ENCODE measurements at regions of chr19 and their contacts with region 1.

Region 1: DNA sequence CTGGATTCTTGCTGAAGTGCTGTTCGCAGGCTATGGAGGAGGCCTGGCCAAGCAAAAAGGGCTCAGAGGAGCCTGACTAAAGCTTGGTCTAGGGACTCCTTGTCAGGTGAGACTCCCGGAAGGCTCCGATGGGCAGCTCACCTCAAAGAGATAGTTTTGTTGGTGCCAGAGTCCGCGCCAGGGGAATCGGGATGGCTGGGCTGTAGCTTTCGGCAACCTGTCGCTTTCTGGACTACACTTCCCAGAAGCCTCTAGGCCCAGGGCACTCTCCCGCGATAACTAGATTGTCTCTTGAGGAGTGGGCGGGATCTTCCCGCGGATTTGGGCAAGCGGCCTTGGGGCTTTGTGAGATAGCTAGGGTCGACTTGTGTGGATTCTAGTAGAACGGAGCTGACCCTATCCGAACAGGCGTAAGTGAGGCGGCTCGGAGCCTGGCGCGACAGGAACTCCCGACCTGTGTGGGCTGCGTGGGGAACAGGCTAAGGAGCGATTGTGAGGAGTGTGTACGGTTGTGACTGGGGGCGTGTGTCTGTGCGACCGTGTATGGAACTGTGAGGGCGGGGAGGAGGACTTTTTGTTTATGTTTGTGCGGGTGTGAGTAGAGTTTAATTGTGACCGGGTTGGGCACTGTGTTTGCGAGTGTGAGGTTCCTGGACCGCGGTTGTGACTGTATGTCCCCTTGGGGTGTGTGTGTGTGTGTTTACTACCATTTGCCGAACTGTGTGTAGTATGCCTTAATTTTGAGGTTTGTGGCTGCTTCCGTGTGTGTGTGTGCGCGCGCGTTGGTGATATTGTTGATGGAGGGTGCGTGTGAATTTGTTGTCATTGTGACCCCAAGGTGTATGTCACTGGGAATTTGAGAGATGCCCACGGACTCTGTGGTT is at the start of gene ZNF345:
- DNase-seq: peak; percentile 68
- H3K4me3 ChIP-seq: peak within 1 kb of the TSS; percentile 100
- CTCF ChIP-seq: no peak

Region 2: DNA sequence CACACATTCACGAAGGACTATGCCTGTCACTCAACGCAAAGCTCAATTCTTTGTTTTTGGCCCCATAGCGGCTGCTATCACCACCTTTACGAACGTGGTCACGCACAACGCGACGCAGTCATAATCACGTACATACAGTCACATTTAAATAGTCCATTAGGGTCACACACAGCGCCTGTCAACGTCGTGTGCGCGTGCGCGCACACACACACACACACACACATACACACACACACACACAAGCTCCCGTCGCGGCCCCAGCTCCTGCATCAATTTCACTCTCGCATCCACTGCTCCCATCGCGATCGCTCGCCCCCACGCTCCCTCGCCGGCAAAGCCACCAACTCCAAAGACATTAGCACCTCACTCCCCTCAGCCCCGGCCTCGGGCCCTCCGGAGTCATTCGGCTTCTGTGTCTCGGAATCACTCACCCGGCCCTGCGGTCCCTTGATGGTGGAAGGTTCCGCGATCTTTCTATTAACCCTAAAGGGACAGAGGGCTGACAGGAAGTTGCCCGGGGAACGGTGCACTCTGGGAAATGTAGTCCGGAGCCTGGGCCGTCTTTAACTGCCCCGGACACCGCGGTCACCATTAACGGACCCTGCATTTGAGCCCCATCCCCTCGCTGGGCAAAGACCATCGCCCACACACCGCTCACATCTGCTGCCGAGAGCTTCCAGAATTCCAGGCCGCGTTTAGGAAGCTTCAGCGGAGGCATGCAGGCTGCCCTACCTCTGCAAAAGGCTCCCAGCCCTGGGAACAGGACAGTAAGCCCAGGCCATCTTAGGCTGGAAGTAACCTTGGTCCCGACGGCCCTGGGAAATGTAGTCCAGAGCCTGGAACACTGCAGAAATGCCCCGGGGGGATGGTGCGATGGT is 12.7 kb before region 1 on chr19 and contains the start of gene ZNF790:
- CTCF ChIA-PET with region 1: no interaction called
- POLR2A ChIA-PET with region 1: interaction called, 29 read pairs
- DNase-seq: peak; percentile 56
- H3K4me3 ChIP-seq: peak within 1 kb of the TSS; percentile 87
- CTCF ChIP-seq: no peak

Measured in AG04449 (cell line).